ENCODE measurements at regions of chr12 and their contacts with region 1.

Region 1: DNA sequence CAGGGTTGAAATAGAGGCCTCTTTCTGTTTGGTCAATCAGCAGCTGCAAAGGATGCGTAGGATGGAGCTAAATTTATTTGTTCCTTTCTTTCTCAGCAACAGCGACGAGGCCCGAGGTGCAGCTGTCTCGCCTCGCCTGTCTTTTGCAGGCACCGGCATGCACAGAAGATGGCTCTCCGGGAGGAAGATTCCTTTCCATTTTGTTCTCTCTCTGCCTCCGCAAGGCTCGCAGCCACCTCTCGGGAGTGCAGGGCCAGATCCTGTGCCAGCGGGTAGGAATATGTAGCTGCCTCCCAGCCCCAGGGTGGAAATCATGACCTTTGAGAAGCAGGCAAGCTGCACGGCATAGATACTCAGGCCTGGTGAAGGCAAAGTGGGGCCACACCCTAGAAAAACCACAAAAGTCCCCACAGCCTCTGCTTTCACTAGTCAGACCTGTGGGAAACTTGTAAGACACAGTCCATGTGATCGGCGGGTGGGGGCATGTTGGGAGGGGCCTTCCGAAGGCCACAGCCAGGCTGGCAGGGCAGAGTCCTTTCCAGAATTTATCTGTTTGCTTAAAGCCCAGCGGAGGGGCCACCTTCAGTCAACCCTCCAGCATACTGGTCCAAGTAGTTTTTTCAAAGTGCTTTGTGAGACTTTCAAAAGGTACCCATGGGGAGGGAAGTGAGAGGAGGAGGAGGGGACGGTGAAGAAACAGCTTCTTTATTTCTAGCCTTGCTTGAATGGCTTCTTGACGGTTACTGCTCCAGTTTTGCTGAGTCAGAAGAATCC is at the start of gene MAP1LC3B2:
- DNase-seq: peak; percentile 99
- H3K4me3 ChIP-seq: peak within 1 kb of the TSS in 1 of 3 experiments; percentile 21
- H3K27ac ChIP-seq: peak within 1 kb of the TSS; percentile 90
- H3K4me1 ChIP-seq: peaks cover 27% of the 10 kb centered on the region
- H3K27me3 ChIP-seq: no peaks in the 10 kb centered on the region
- CTCF ChIP-seq: no peak
- total RNA-seq, gene MAP1LC3B2: 1.5 to 2.9 TPM

Region 2: DNA sequence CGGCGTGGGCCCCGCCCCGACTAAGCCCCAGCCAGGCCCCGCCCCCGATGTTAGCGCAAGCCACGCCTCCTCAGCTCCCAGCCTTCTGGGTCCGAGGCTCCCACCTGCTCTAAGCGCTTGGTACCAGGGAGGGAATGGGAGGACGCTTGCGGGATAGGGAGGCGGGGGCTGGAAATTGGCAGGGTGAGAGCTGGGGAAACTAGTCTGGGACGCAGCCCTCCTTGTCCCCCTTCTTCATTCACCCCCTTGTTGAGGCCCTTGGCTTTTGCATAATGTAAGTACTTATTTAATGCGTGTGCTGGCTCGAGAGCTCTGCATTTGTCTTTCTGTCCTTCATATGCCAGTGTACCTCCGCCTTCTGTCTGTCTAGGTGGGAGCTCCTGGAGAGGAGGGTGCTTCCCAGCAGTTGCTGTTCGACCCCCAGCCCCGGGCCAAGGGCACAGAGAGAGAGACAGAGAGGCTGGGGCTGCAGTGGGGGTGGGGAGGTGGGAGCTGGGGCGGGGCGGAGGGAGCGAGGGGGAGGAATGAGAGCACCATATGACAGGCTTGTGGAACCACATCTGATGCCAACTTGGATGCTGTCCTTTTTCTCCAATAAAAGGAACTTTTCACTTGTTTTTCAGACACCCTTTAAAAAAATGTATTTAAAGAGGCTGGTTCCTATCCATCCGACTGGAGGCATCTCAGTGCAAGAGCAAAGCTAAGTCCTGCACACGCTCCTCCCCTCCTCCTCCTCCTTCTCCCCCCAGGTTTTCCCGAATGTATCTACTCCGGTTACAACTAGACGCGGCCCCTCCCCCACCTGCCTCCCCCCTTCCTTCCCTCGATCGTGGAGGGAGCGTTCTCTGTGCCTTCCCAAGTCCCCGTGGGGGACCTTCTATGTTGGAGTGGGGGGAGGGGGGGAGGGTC is 25.8 kb before region 1 on chr12:
- CTCF ChIA-PET with region 1: no interaction called
- dilution Hi-C with region 1: no loop called
- in situ Hi-C with region 1: no loop called
- intact Hi-C with region 1: loop called (anchors 1 kb)
- DNase-seq: no peak
- H3K4me3 ChIP-seq: peak overlapping the region; percentile 32 to 56 (median 39)
- H3K27ac ChIP-seq: no peak overlapping the region
- H3K4me1 ChIP-seq: peaks cover 20% of the 10 kb centered on the region
- H3K27me3 ChIP-seq: no peaks in the 10 kb centered on the region
- CTCF ChIP-seq: peak in 1 of 2 donors; percentile 7

Region 3: DNA sequence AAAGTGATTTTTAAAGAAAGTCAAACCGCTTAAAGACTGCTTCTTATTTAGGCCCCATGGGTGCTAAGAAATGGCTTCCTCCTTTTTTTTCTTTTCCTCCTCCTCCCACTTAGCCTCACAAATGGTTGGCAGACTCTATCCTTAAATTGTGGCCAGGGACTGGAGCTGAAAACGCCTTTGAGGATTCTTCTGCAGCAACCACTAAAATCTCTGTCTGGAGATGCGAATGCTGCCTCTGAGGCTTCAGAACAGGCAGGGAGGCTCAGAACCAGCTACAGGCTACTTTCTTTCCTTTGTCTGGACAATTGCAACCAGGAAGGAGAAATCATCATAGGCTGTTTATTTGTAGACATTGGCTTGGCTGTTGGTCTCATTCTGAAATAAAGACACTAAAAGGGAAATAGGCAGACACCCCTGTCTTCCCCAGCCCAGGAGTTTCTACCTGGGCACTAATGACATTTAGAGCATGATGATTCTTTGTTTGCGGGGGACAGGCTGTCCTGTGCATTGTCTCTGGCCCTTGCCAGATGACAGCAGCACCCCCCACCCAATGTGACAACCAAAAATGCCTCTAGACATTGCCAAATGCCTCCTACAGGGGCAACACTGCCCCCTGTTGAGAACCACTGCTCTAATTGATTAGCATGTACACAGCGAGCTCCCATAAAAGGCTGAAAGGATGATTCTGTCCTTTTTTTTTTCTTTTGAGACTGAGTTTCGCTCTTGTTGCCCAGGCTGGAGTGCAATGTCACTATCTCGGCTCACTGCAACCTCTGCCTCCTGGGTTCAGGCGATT is 50.2 kb after region 1 on chr12:
- CTCF ChIA-PET with region 1: no interaction called
- dilution Hi-C with region 1: no loop called
- in situ Hi-C with region 1: no loop called
- intact Hi-C with region 1: no loop called
- DNase-seq: no peak
- H3K4me3 ChIP-seq: no peak overlapping the region
- H3K27ac ChIP-seq: no peak overlapping the region
- H3K4me1 ChIP-seq: peaks cover 5% of the 10 kb centered on the region
- H3K27me3 ChIP-seq: no peaks in the 10 kb centered on the region
- CTCF ChIP-seq: peak; percentile 17 to 30

Region 4: DNA sequence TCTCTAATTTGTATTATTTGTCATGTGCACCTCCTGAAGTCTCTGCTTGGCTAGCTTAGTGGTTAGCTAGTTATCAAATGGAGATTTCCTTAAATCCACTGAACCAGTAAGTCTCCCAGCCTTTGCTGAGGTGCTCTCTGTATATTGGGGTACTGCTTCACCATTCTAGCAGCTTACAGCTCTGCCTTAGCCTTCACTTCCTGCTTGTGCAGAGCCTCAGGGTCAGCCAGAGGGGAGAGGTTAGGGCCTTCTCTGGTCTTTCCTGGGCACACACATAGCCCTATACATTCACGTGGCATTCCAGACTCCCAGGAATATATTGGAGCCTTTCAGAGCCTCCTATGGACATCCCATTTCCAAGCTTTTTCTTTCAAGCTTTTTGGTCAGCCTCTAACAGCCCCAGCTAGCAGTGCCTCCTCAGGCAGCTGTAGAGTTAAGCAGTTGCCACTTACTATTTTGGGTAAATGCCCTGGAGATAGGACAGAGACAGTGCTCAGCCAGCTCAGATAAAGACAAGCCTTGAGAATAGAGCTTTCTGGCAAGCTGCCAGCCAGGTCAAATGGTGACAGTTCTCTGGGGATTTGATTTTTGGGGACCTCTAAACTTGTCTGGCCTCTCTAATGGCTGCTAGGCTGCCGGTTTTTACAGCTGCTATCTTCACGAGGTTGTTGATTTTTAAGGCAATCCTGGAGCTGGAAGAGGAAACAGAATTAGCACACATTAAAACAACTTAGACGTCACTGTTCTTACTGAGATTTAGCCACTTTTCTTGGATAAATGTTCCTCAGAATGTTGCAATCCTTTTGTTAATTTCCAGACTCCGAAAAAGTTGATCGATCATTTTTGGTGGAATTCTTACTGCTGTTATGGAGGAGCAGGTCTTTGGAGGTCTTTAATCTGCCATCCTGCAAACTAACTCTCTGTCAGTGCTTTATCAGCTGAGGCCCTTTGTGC is 384.3 kb after region 1 on chr12:
- CTCF ChIA-PET with region 1: no interaction called
- dilution Hi-C with region 1: no loop called
- in situ Hi-C with region 1: no loop called
- intact Hi-C with region 1: no loop called
- DNase-seq: no peak
- H3K4me3 ChIP-seq: no peak overlapping the region
- H3K27ac ChIP-seq: no peak overlapping the region
- H3K4me1 ChIP-seq: no peaks in the 10 kb centered on the region
- H3K27me3 ChIP-seq: no peaks in the 10 kb centered on the region
- CTCF ChIP-seq: no peak